Transverse colon (tissue), 4 donors: ENCODE measurements at regions of chr5 and their contacts with region 1.

Region 1: DNA sequence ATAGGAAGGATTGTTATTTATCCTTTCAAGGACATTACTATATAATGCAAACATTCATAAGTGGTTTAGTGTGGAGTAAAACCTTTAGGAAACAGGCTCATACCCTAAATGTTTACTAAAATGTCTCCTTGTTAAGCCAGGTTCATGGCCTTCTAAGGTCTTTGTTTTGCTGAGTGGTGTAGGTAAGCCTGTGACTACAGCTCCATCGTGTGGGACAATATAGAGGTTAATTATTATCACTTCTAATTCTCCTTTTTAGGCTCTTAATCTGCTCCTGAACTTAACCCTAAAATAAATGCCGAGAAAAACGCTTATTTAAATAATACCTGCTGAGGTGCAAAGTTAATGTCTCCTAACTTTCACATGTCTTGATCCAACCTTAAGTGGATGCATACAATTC is 43.8 kb downstream of the SPINK5 start:
- DNase-seq: no peak
- H3K4me3 ChIP-seq: no peak overlapping the region
- H3K27ac ChIP-seq: no peak overlapping the region
- H3K4me1 ChIP-seq: peaks cover 0 to 5% (median 0%) of the 10 kb centered on the region in 4 donors
- H3K27me3 ChIP-seq: no peaks in the 10 kb centered on the region
- CTCF ChIP-seq: peak in 1 of 5 experiments; percentile 9
- EP300 ChIP-seq: no peak
- POLR2A ChIP-seq: no peak

Region 2: DNA sequence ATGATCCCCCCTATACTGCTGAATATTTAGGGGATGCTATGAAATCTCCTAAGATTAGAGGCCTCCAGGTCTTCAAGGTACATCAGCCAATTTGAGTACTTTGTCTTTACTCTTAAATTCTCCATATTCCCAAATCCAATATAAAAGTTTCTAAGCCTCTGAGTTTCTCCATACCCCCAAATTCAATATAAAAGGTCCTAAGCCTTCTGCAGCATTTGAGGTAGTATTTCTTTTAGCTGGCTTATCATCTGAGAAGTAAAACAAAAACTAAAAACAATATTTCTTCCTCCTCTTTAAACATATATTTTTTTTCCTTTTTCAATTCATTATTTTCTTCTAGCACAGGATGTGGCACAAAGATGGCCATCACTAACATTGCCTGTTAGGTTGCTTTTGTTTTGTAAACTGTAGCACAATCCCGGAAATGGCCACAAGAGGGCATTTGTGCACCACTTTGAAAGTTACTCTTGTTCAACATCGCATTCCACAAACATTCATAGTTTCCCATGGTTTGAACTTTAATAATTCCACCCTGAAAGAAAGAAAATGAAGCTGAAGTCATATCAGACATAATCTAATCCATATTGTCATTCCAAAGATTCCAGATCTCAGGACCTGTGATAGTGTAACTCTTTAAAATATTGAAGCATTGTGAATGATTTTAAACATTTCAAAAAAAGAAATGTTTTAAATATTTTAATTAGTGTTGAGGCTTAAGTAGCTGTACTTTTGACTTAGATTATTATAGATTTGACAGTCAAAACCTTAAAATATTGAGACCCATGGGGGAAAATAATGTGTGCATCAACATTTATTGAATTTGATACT is 250.1 kb before region 1 on chr5:
- in situ Hi-C with region 1: loop called in 2 of 4 experiments (anchors 25 kb)
- intact Hi-C with region 1: no loop called
- DNase-seq: peak; percentile 69
- H3K4me3 ChIP-seq: no peak overlapping the region
- H3K27ac ChIP-seq: no peak overlapping the region
- H3K4me1 ChIP-seq: peaks cover 0 to 11% (median 4%) of the 10 kb centered on the region in 4 donors
- H3K27me3 ChIP-seq: no peaks in the 10 kb centered on the region
- CTCF ChIP-seq: peak; percentile 68 to 82 (median 78)
- EP300 ChIP-seq: no peak
- POLR2A ChIP-seq: no peak

Region 3: GRCh38 chr5:147949711-147950573 is 157.7 kb before region 1 on chr5:
- in situ Hi-C with region 1: loop called in 3 of 4 experiments (anchors 10 kb)
- intact Hi-C with region 1: no loop called
- DNase-seq: no peak
- H3K4me3 ChIP-seq: no peak overlapping the region
- H3K27ac ChIP-seq: no peak overlapping the region
- H3K4me1 ChIP-seq: peaks cover 0 to 2% (median 0%) of the 10 kb centered on the region in 4 donors
- H3K27me3 ChIP-seq: no peaks in the 10 kb centered on the region
- CTCF ChIP-seq: peak; percentile 61 to 82 (median 70)
- EP300 ChIP-seq: no peak
- POLR2A ChIP-seq: no peak